ENCODE measurements at regions of chr5 and their contacts with region 1.

Region 1: DNA sequence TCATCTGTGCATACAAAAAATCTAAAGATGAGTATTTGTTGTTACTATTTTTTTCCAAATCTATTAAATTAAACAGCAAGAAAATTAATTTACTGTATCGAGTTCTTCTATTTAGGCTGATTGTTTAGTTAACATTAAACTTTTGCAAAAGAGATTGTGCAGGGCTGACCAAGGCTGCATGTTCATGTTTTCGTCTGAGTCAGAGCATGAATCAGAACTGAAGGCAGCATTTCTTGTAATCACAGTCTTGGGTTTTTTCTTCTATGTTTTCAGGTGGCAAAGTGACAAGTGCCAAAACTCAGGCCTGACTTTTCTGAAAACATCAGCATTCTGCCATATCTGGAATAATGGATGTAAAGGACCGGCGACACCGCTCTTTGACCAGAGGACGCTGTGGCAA is 1007.0 kb upstream of the WWC1 start:
- DNase-seq: peak; percentile 61
- H3K4me3 Mint-ChIP-seq: no peak overlapping the region
- H3K27ac Mint-ChIP-seq: peak overlapping the region; percentile 26
- H3K4me1 Mint-ChIP-seq: peaks cover 21% of the 10 kb centered on the region
- H3K27me3 Mint-ChIP-seq: no peaks in the 10 kb centered on the region
- CTCF ChIP-seq: no peak

Region 2: GRCh38 chr5:167294901-167295680 is 10.6 kb after region 1 on chr5:
- CTCF ChIA-PET with region 1: interaction called, 3 read pairs
- POLR2A ChIA-PET with region 1: interaction called, 30 read pairs
- intact Hi-C with region 1: no loop called
- DNase-seq: peak; percentile 93
- H3K4me3 Mint-ChIP-seq: peak overlapping the region; percentile 62
- H3K27ac Mint-ChIP-seq: peak overlapping the region; percentile 90
- H3K4me1 Mint-ChIP-seq: peaks cover 44% of the 10 kb centered on the region
- H3K27me3 Mint-ChIP-seq: no peaks in the 10 kb centered on the region
- CTCF ChIP-seq: no peak

Region 3: DNA sequence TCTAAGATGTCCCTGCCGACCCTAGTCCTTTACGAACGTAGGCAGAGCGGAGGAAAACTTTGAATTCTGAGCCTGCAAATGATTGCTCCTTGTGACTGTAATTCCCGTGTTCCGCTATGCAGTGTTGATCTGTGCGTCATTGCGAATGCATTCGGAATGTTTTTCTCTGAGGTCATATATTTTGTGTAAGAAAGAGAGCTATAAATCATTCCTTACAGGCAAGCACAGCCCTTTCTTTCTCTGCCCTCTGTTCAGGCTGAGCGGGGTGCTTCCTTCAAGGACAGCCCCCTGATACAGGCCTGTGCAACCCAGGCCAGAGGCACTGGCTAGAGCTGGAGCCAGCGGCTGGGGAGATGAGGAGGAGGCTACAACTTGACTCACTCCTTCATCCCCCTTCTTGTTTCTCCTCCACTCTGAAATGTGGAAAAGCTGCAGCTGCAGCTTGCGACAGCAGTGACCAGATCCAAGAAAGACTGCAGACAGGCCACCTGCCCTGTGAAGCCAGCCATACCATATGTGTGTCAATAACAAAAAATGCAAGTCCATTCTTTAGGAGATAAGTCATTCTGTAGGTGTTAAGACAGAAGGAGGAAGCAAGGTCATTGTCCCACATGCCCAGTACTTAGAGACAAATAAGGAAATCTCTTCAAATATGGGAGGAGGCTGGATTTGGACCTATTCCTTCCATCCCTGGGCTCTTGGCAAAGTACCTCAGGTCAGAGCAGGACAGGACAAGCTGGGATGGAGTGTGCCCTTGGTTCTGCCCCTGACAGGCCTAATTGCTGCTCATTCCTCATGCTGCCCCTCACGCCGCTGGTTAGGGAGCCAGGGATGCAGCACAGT is 661.3 kb after region 1 on chr5:
- CTCF ChIA-PET with region 1: no interaction called
- POLR2A ChIA-PET with region 1: no interaction called
- intact Hi-C with region 1: no loop called
- DNase-seq: peak; percentile 74
- H3K4me3 Mint-ChIP-seq: no peak overlapping the region
- H3K27ac Mint-ChIP-seq: peak overlapping the region; percentile 73
- H3K4me1 Mint-ChIP-seq: peaks cover 21% of the 10 kb centered on the region
- H3K27me3 Mint-ChIP-seq: no peaks in the 10 kb centered on the region
- CTCF ChIP-seq: no peak

Region 4: GRCh38 chr5:168047043-168047668 is 762.7 kb after region 1 on chr5:
- CTCF ChIA-PET with region 1: no interaction called
- POLR2A ChIA-PET with region 1: no interaction called
- intact Hi-C with region 1: no loop called
- DNase-seq: peak; percentile 89
- H3K4me3 Mint-ChIP-seq: no peak overlapping the region
- H3K27ac Mint-ChIP-seq: no peak overlapping the region
- H3K4me1 Mint-ChIP-seq: peaks cover 11% of the 10 kb centered on the region
- H3K27me3 Mint-ChIP-seq: peaks cover 34% of the 10 kb centered on the region
- CTCF ChIP-seq: peak; percentile 88

Measured in MCF 10A (cell line).